Mammary epithelial cell (primary cell): ENCODE measurements at regions of chr6 and their contacts with region 1.

Region 1: GRCh38 chr6:112899541-112899940 is 552.4 kb downstream of the RFPL4B start:
- DNase-seq: no peak
- H3K4me3 ChIP-seq: no peak overlapping the region
- H3K27ac ChIP-seq: no peak overlapping the region
- H3K4me1 ChIP-seq: no peaks in the 10 kb centered on the region
- H3K27me3 ChIP-seq: no peaks in the 10 kb centered on the region
- CTCF ChIP-seq: no peak

Region 2: GRCh38 chr6:112839525-112839961 is 60.0 kb before region 1 on chr6:
- CTCF ChIA-PET with region 1: no interaction called
- dilution Hi-C with region 1: no loop called
- in situ Hi-C with region 1: loop called in 1 of 2 experiments (anchors 10 kb)
- intact Hi-C with region 1: no loop called
- DNase-seq: peak; percentile 42
- H3K4me3 ChIP-seq: no peak overlapping the region
- H3K27ac ChIP-seq: no peak overlapping the region
- H3K4me1 ChIP-seq: no peaks in the 10 kb centered on the region
- H3K27me3 ChIP-seq: no peaks in the 10 kb centered on the region
- CTCF ChIP-seq: no peak

Region 3: DNA sequence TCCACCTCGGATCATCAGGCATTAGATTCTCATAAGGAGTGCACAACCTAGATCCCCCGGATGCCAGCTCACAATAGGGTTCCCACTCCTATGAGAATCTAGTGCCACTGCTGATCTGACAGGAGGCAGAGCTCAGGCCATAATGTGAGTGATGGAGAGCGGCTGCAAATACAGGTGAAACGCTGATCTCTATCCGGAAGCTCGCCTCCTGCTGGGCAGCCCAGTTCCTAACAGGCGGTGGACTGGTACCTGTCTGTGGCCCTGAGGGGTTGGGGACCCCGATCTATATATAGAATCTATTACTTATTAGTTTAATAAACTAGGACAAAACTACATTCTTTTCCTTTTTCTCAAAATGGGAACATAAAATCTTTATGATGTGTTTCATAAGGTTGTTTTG is 189.5 kb after region 1 on chr6:
- CTCF ChIA-PET with region 1: no interaction called
- dilution Hi-C with region 1: no loop called
- in situ Hi-C with region 1: no loop called
- intact Hi-C with region 1: no loop called
- DNase-seq: no peak
- H3K4me3 ChIP-seq: no peak overlapping the region
- H3K27ac ChIP-seq: no peak overlapping the region
- H3K4me1 ChIP-seq: no peaks in the 10 kb centered on the region
- H3K27me3 ChIP-seq: no peaks in the 10 kb centered on the region
- CTCF ChIP-seq: no peak